Gastrocnemius medialis (tissue), 4 donors: ENCODE measurements at regions of chr22 and their contacts with region 1.

Region 1: DNA sequence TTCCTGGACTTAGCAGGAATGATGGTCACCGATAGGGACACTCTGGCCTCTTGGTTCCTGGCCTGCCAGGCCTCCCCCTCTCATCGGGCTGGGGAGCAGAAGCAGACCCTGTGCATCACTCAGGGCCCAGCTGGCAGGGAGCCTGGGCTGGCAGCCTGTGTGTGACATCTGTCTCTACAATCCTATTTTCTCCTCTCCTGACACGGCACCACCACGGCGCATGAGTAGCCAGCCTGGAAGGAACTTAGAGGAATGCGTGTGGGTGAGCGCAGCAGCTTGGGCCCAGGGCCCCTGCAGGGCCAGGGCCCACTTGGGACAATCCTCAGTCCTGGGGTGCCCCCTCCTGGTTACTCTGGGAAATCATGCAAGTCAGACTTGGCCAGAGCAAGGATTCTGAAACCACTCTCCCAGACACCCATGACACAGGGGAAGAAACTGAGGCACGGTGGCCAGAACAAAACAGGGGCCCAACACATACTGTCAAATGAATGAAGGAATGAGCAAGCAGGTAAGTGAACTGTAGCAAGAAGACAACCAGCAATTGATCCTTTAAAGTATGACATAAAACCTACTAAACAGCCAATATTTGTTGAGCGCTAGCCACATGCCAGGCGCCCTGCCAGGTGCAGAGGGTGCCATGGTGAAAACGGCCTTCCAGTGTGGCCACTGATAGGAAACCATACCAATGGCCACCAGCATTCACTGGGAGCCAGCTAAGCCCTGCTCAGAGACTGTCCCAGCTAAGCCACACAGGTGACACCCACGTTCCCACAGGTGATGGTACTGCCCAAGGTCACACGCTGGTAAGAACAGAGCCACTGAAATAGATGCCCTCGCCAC is 13.3 kb downstream of the RSPH14 start:
- DNase-seq: peak in 1 of 2 donors; percentile 34
- ATAC-seq: peak; percentile 51 to 73
- H3K4me3 ChIP-seq: no peak overlapping the region
- H3K27ac ChIP-seq: no peak overlapping the region
- H3K4me1 ChIP-seq: peaks cover 0 to 3% of the 10 kb centered on the region in 2 donors
- H3K27me3 ChIP-seq: no peaks in the 10 kb centered on the region
- CTCF ChIP-seq: peak; percentile 69 to 80 (median 75)
- POLR2A ChIP-seq: no peak

Region 2: DNA sequence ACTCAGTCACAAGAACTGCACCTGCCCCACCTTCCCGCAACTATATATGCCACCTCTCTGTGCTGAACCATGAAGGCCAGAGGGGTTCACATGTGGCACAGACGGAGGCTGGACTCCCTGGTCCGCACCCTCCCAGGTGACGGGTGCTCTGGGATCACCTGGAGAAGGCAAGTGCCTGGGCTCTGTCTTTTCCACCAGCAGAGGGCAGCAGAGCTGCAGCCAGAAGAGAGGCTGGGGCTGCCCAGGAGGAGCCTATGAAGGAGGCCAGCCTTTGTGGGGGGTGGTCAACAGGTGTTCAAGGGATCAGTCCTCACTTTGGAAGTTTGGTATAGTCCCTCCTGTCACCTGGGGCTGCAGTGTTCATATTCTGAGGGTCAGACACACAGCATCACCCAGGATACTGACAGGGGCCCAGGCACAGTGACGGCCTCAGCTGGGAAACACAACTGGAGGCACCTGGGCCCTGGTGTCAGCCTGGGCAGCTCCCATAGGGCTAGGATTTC is 280.1 kb before region 1 on chr22:
- in situ Hi-C with region 1: loop called in 2 of 4 experiments (anchors 10 to 25 kb)
- intact Hi-C with region 1: loop called (anchors 1 kb)
- DNase-seq: peak in 1 of 2 donors; percentile 9
- ATAC-seq: peak; percentile 52 to 56
- H3K4me3 ChIP-seq: no peak overlapping the region
- H3K27ac ChIP-seq: no peak overlapping the region
- H3K4me1 ChIP-seq: no peaks in the 10 kb centered on the region
- H3K27me3 ChIP-seq: peaks cover 0 to 4% (median 0%) of the 10 kb centered on the region in 3 donors
- CTCF ChIP-seq: peak; percentile 49 to 79 (median 68)
- POLR2A ChIP-seq: no peak

Region 3: GRCh38 chr22:22855617-22856308 is 272.7 kb before region 1 on chr22:
- in situ Hi-C with region 1: loop called in 1 of 4 experiments (anchors 10 kb)
- intact Hi-C with region 1: no loop called
- DNase-seq: no peak
- ATAC-seq: no peak
- H3K4me3 ChIP-seq: no peak overlapping the region
- H3K27ac ChIP-seq: no peak overlapping the region
- H3K4me1 ChIP-seq: no peaks in the 10 kb centered on the region
- H3K27me3 ChIP-seq: peaks cover 0 to 10% (median 0%) of the 10 kb centered on the region in 3 donors
- CTCF ChIP-seq: no peak
- POLR2A ChIP-seq: no peak